Panc1 (cell line): ENCODE measurements at regions of chr9 and their contacts with region 1.

Region 1: DNA sequence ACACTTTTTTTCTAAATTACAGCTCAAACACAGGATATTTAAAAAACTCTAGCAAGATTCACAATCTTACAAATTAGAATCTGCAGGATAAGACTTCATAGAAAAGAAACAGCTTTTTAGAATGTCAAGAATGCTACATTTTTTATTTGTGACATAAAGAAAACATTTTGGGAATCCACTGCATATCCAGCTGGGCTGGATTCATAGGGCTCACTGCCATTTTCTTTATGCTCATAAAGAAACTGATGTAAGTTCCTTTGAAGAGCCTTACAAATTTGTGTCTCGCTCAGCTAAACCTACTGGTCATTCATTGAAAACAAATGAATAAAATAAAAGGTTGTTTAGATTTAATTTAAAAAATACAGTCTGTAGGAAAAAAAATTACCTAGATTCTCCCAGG is 332.3 kb downstream of the TRPM3 start:
- DNase-seq: no peak
- ATAC-seq: no peak
- H3K4me3 ChIP-seq: no peak overlapping the region
- H3K27ac ChIP-seq: no peak overlapping the region
- H3K4me1 ChIP-seq: no peaks in the 10 kb centered on the region
- H3K27me3 ChIP-seq: no peaks in the 10 kb centered on the region
- CTCF ChIP-seq: no peak

Region 2: DNA sequence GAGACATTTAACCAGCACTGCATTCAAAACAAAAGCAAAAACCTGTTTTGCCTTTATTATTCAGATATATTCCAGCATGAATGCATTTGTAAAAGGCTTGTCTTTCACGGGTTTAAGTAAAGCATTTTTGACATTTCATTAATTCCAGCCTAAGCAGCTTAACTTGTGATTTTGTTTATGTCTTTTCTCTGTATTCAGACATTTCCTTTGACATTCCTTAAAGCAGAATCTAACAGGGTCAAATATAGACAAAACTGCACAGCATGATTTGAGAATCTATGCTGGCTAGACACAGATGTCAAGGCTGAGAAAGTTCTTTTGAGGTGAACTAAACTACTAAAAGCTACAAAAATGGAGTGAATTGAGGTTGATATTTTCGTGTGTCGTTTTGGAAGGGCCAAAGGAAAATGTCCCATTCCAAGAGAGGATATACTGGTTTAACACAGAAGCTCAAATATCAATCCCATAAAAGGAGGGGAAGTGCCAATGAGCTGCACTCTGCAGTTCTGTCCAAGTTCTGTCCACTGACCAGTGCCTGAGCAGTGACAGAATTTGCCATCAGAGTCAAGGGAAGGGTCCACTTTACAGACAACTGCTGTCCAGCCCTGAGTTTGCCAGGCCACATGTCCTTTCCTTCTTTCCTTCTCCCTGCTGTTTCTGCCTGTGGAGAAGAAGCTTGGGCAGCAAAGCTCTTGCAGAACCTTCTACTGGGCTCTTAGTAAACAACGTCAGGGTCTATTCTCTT is 175.9 kb before region 1 on chr9:
- CTCF ChIA-PET with region 1: interaction called, 11 read pairs
- POLR2A ChIA-PET with region 1: no interaction called
- in situ Hi-C with region 1: no loop called
- intact Hi-C with region 1: no loop called
- DNase-seq: no peak
- ATAC-seq: no peak
- H3K4me3 ChIP-seq: no peak overlapping the region
- H3K27ac ChIP-seq: no peak overlapping the region
- H3K4me1 ChIP-seq: no peaks in the 10 kb centered on the region
- H3K27me3 ChIP-seq: no peaks in the 10 kb centered on the region
- CTCF ChIP-seq: no peak